SK-N-SH (cell line): ENCODE measurements at regions of chr11 and their contacts with region 1.

Region 1: DNA sequence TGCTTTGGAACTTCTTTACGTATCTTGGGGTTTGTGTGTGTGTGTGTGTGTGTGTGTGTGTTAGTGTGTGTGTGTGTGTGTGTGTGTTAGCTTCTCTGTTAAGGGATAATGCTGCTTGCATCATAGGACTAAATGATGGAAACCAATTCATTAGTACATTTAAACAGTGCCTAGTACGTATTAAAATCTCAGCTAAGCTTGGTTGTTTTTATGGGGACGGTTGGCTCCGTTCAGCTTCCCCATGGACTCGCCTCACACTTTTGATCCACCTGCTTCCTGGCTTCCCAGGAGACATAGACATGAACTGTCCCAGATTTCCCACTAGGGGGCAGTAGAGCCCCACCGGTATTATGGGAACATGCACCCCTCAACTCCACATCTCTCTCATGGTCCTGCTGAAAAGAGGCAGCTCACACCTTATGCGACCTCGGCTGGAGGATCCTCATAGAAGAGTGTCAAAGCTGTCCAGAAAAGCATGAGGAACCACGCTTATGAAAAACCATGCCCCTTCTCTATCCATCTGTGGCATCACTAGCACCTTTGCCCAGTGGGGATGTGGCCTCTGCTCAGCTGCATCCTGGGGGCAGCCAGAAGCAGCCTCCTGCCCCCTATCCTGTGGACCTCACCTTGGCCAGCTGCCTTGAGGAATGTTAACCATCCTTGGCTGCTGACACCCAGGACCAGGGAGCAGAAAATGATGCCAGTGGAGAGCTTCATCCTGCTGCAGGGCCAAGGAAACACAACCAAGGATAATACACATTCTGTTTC is 9.7 kb upstream of the SAAL1 start:
- DNase-seq: peak; percentile 85
- H3K4me3 ChIP-seq: no peak overlapping the region; a peak in 1 of 4 replicates
- H3K27ac ChIP-seq: no peak overlapping the region
- H3K4me1 ChIP-seq: no peaks in the 10 kb centered on the region
- H3K27me3 ChIP-seq: peaks cover 9% of the 10 kb centered on the region; the same call in 1 of the 2 replicates
- CTCF ChIP-seq: peak; percentile 91
- EP300 ChIP-seq: no peak
- RAD21 ChIP-seq: peak; percentile 89

Region 2: GRCh38 chr11:18088966-18089365 is 26.6 kb before region 1 on chr11:
- CTCF ChIA-PET with region 1: interaction called, 25 read pairs
- POLR2A ChIA-PET with region 1: no interaction called
- DNase-seq: no peak
- H3K4me3 ChIP-seq: no peak overlapping the region
- H3K27ac ChIP-seq: no peak overlapping the region
- H3K4me1 ChIP-seq: no peaks in the 10 kb centered on the region
- H3K27me3 ChIP-seq: no peaks in the 10 kb centered on the region
- CTCF ChIP-seq: no peak
- EP300 ChIP-seq: no peak
- RAD21 ChIP-seq: no peak

Region 3: GRCh38 chr11:18203723-18204122 is 88.2 kb after region 1 on chr11:
- CTCF ChIA-PET with region 1: interaction called, 24 read pairs
- POLR2A ChIA-PET with region 1: interaction called, 4 read pairs
- DNase-seq: peak; percentile 69
- H3K4me3 ChIP-seq: no peak overlapping the region; a peak in 1 of 4 replicates
- H3K27ac ChIP-seq: no peak overlapping the region
- H3K4me1 ChIP-seq: no peaks in the 10 kb centered on the region
- H3K27me3 ChIP-seq: no peaks in the 10 kb centered on the region
- CTCF ChIP-seq: peak; percentile 44; the same call in 1 of the 2 replicates
- EP300 ChIP-seq: no peak
- RAD21 ChIP-seq: peak; percentile 56

Region 4: GRCh38 chr11:18731949-18732821 is 616.6 kb after region 1 on chr11:
- CTCF ChIA-PET with region 1: interaction called, 13 read pairs
- POLR2A ChIA-PET with region 1: no interaction called
- DNase-seq: peak; percentile 86
- H3K4me3 ChIP-seq: no peak overlapping the region
- H3K27ac ChIP-seq: no peak overlapping the region
- H3K4me1 ChIP-seq: no peaks in the 10 kb centered on the region; a peak in 1 of 4 replicates
- H3K27me3 ChIP-seq: no peaks in the 10 kb centered on the region
- CTCF ChIP-seq: peak; percentile 98
- EP300 ChIP-seq: no peak
- RAD21 ChIP-seq: peak; percentile 84